Tibial artery (tissue), 4 donors: ENCODE measurements at regions of chr1 and their contacts with region 1.

Region 1: GRCh38 chr1:171313835-171314320 is at the start of gene FMO4:
- DNase-seq: peak; percentile 92 to 96
- H3K4me3 ChIP-seq: peak within 1 kb of the TSS; percentile 39 to 51
- H3K27ac ChIP-seq: peak within 1 kb of the TSS; percentile 69 to 71
- H3K4me1 ChIP-seq: peaks cover 0 to 22% (median 9%) of the 10 kb centered on the region in 4 donors
- H3K27me3 ChIP-seq: no peaks in the 10 kb centered on the region
- CTCF ChIP-seq: peak; percentile 76 to 79

Region 2: DNA sequence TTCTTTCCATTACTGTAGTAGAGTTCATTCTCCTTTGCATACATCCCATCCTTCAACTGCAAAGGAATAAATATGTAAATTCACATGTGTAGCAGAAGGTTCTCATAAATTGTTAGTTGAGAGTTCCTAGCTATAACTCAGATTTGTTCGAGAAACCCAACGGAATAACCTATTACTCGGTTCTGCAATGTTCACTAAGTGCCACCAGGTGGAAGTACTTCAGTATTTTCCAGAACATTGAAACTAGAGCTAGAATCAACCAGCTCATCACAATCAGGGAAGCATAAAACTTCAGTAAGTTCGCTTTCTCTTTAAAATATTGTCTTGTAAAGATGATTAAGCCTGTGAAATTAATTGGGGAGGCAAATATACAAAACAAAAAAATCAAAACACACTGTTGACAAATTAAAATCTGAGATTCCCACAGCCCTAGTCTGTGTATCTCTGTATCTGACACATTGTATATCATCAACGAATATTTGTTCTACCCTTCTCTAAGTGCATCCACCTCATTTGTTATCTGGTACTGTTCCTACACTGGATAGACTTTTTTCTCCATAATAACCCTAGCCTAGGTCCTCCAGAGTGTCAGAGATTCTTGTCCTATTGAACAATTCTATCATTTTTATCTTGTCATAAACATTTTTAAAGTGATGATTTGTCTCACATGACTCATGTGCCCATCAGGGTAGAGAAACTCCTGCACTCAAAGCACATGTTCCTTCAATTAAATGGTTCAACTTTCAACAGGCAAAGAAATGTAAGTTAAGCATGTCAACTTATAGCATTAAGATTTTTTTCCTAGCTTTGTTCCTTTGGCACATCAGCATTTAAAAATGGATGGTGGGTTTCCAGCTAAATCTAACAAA is 346.6 kb before region 1 on chr1:
- intact Hi-C with region 1: loop called (anchors 5 kb)
- DNase-seq: no peak
- H3K4me3 ChIP-seq: no peak overlapping the region
- H3K27ac ChIP-seq: no peak overlapping the region
- H3K4me1 ChIP-seq: peaks cover 0 to 10% (median 1%) of the 10 kb centered on the region in 4 donors
- H3K27me3 ChIP-seq: no peaks in the 10 kb centered on the region
- CTCF ChIP-seq: peak; percentile 73 to 82

Region 3: DNA sequence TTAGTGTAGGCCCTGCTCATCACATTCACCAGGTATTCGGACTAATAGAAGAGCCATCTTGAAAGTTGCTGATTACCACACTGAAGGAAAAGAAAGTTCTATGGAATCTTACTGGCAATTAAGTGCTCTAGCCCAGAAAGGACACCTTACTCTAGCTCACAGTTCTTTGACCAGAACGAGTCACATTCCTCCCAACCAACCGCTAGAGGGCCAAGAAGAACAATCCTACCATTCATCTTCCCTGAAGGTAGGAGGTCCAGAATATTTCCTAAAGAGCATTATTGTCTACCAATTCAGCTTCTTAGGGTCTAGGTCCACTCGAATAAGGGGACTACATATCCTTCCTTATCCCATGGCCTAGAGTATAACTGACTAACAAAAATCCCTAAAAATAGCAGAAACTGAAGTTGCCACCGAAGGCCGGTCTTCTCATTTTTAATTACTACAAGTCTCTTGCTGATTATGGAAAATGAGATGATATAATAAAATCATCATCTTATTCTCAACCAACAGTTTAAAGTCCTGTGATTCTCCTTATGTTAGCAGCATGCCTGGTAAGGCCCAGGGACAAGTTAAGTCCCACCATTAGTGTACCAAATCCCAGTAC is 68.3 kb before region 1 on chr1:
- intact Hi-C with region 1: loop called (anchors 5 kb)
- DNase-seq: no peak
- H3K4me3 ChIP-seq: no peak overlapping the region
- H3K27ac ChIP-seq: no peak overlapping the region
- H3K4me1 ChIP-seq: no peaks in the 10 kb centered on the region
- H3K27me3 ChIP-seq: no peaks in the 10 kb centered on the region
- CTCF ChIP-seq: peak; percentile 67 to 68

Region 4: DNA sequence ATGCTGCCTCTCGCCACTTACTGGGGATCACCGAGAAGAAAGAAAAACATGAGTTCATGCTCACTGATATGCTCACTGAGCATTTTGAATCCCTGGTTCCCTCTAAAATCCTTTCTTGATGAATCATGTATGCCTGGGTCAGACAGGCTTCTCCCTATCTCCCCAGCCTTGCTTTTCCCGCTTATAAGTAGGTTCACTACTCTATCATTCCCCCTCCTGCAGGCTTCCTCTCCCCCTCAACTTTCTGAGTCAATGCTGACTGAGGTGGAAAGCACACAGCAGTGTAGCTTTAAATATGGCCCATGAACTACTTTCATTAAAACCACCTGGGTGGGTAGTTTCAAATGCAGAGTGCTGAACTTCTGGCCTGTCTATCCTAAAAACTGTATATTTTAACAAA is 41.8 kb after region 1 on chr1:
- intact Hi-C with region 1: loop called (anchors 2 kb)
- DNase-seq: no peak
- H3K4me3 ChIP-seq: no peak overlapping the region
- H3K27ac ChIP-seq: no peak overlapping the region
- H3K4me1 ChIP-seq: peaks cover 0 to 14% (median 0%) of the 10 kb centered on the region in 4 donors
- H3K27me3 ChIP-seq: no peaks in the 10 kb centered on the region
- CTCF ChIP-seq: no peak

Region 5: DNA sequence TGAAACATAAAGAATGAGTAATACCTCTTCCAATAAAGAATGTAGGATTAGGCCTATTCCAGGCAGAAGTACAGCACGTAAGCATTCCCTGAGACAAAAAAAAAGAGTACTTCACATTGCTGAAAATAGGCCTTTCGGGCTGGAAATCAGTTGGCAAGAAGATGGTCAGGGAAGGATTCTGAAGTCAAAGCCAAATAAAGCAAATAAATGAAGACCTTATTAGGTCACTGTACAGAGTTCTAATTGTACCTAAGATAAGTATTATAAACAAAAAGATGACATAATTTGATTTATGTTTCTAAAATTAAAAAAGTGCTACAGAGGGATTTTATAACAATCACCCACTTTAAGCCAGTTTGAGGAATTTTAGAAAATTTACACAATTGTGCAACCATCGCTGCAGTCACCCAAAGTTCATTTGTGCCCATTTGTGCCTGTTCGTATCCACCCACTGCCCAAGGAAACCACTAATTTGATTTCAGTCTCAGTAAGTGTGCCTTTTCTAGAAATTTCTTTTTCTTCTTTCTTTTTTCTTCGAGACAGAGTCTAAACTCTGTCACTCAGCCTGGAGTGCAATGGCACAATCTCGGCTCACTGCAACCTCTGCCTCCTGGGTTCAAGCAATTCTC is 58.7 kb after region 1 on chr1:
- intact Hi-C with region 1: no loop called
- DNase-seq: no peak
- H3K4me3 ChIP-seq: no peak overlapping the region
- H3K27ac ChIP-seq: peak overlapping the region; percentile 72 to 76
- H3K4me1 ChIP-seq: peaks cover 0 to 26% (median 16%) of the 10 kb centered on the region in 4 donors
- H3K27me3 ChIP-seq: no peaks in the 10 kb centered on the region
- CTCF ChIP-seq: no peak

Region 6: DNA sequence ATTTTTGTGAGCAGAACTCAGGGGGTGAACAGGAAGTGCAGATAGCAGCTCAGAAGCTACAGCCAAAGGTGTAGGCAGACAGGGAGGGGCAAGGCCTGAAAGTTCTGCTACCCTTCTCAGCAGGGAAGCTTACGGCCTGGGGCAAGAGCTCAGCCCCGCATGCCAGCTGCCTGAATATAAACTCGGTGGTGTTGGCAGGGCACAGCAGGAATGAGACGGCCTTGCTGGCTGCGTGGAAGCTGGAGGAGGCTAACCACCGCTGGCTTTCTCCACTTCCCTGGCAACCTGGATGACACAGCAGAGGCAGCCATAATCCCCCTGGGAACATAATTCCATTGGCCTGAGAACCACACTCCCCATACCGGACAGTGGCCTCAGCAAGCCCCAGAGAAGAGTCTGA is 89.5 kb after region 1 on chr1:
- intact Hi-C with region 1: loop called (anchors 10 kb)
- DNase-seq: no peak
- H3K4me3 ChIP-seq: no peak overlapping the region
- H3K27ac ChIP-seq: peak overlapping the region; percentile 48 to 49
- H3K4me1 ChIP-seq: peaks cover 0 to 15% (median 9%) of the 10 kb centered on the region in 4 donors
- H3K27me3 ChIP-seq: no peaks in the 10 kb centered on the region
- CTCF ChIP-seq: no peak